WTC11 (cell line): ENCODE measurements at regions of chr5 and their contacts with region 1.

Region 1: DNA sequence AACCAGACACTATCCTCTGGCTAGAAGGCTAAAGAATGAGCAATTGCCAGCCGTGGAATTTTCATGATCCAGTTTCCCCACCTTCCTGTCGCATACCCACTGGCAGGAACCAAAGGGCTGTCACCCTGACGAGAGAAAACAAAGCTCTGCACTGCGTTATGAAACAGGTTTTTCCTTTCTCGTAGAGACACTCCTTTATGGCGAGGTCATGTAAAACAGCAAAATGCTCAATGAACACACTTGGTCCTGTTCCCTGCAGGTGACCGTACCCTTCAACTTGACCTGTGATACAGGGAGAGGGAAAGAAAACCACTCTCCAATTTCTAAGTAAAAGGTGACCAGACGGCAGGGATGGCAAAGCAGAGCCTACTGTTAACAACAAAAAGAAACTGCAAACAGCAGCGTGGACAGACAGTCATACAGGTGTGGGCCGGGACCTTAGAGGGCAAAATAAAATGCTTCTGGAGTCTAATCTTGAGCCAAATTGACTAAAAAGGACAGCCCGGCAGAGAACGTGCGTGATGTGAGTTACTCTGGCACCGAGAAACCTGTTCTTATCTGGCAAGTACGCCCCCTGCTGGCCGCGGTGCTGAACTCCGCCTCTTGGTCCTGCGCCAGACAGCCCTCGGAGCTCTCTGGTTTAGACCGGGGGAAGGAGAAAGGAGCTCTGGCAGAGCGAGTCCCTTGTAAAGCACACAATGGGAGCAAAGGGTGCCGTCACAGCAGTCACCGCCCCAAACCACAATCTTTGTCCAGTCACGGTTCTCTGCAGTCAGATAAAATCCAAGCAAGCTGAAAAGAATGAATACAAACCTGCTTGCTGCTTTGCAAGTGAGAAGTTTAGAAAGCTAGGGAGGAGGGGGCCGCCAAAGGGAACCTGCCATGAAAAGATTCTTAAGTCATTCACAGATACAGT is 98.9 kb downstream of the EFNA5 start:
- DNase-seq: peak; percentile 96
- ATAC-seq: peak; percentile 94
- H3K4me3 Mint-ChIP-seq: peak overlapping the region; percentile 55
- H3K27ac Mint-ChIP-seq: peak overlapping the region; percentile 70; the same call in 1 of the 2 replicates
- H3K4me1 Mint-ChIP-seq: peaks cover 88% of the 10 kb centered on the region
- H3K27me3 Mint-ChIP-seq: no peaks in the 10 kb centered on the region; the same call in 1 of the 2 replicates
- CTCF ChIP-seq: peak; percentile 94

Region 2: GRCh38 chr5:107284822-107285525 is 286.9 kb before region 1 on chr5:
- CTCF ChIA-PET with region 1: no interaction called
- POLR2A ChIA-PET with region 1: no interaction called
- DNase-seq: no peak
- ATAC-seq: no peak
- H3K4me3 Mint-ChIP-seq: no peak overlapping the region
- H3K27ac Mint-ChIP-seq: no peak overlapping the region
- H3K4me1 Mint-ChIP-seq: 0 out of 2 replicates have a peak, but pooled peaks cover 7% of the 10 kb centered on the region
- H3K27me3 Mint-ChIP-seq: no peaks in the 10 kb centered on the region; the same call in 1 of the 2 replicates
- CTCF ChIP-seq: no peak

Region 3: DNA sequence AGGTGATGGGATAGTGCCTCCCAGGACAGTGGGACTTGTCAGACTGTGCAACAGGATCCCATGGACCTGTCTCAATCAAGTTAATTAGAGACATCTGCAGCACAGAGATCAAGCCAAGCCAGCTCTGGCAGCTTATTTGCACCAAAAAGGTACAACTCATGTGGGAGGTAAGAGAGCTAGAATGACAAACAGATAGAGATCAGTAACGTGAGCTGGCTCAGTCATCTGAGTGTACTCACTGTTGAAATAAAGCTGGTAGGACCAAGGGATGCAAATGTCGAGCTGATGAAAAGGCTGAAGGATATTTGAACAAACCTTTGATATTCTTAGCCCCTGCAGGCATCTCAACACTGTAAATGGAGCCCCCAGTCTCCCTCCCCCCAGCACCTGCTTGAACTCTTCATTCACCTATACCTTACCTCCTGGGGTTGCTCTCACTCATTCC is 99.2 kb before region 1 on chr5:
- CTCF ChIA-PET with region 1: interaction called, 11 read pairs
- POLR2A ChIA-PET with region 1: no interaction called
- DNase-seq: peak; percentile 48
- ATAC-seq: peak; percentile 92
- H3K4me3 Mint-ChIP-seq: peak overlapping the region; percentile 2
- H3K27ac Mint-ChIP-seq: peak overlapping the region; percentile 88
- H3K4me1 Mint-ChIP-seq: peaks cover 91% of the 10 kb centered on the region
- H3K27me3 Mint-ChIP-seq: no peaks in the 10 kb centered on the region; the same call in 1 of the 2 replicates
- CTCF ChIP-seq: no peak

Region 4: GRCh38 chr5:107513337-107514085 is 58.4 kb before region 1 on chr5:
- CTCF ChIA-PET with region 1: interaction called, 14 read pairs
- POLR2A ChIA-PET with region 1: interaction called, 4 read pairs
- DNase-seq: no peak
- ATAC-seq: no peak
- H3K4me3 Mint-ChIP-seq: no peak overlapping the region
- H3K27ac Mint-ChIP-seq: no peak overlapping the region
- H3K4me1 Mint-ChIP-seq: peaks cover 66% of the 10 kb centered on the region
- H3K27me3 Mint-ChIP-seq: no peaks in the 10 kb centered on the region
- CTCF ChIP-seq: no peak

Region 5: DNA sequence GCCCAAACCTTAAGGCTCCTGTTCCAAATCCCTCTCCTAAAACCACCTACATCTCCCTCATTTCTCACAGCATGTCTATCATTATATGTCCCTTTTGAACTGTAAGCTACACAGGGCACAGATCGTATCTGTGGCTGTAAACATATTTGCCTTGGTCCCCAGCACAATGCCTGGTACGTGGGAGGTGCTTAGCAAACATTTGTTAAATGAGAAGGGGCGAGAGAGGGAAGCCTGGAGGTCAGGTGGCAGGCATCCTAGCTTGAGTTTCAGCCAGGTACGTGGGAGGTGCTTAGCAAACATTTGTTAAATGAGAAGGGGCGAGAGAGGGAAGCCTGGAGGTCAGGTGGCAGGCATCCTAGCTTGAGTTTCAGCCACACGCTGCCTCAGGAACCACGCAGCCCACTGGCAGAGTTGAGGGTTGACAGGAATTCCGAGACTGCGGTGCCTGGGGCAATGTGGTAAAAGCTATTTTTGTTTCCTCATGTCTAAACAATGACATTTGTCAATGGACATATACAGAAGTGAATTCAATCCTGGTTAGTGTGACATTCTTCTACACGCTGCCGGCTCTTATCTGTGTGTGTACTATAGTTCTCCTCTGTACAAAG is 14.7 kb before region 1 on chr5:
- CTCF ChIA-PET with region 1: interaction called, 40 read pairs
- POLR2A ChIA-PET with region 1: no interaction called
- DNase-seq: peak; percentile 58
- ATAC-seq: peak; percentile 71
- H3K4me3 Mint-ChIP-seq: no peak overlapping the region
- H3K27ac Mint-ChIP-seq: no peak overlapping the region; the same call in 1 of the 2 replicates
- H3K4me1 Mint-ChIP-seq: peaks cover 58% of the 10 kb centered on the region
- H3K27me3 Mint-ChIP-seq: no peaks in the 10 kb centered on the region
- CTCF ChIP-seq: no peak

Region 6: DNA sequence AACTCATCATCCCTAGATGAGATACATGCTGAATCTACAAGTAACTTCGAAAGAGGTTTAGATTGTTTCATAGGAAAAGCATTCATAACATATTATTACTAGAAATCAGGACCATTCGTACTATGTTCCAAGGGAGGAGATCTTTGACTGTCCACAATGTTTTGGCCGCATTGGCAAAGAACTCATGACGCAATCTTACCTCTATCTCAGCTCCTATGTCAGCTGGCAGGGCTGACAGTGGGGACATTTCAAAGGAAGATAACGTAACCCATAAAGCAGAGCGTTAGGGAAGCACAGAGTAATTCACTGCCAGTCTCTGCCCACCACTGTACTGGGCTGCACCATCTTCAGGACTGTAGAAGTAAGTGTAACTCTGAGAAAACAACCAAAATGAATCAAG is 29.2 kb after region 1 on chr5:
- CTCF ChIA-PET with region 1: interaction called, 32 read pairs
- POLR2A ChIA-PET with region 1: no interaction called
- DNase-seq: no peak
- ATAC-seq: no peak
- H3K4me3 Mint-ChIP-seq: no peak overlapping the region
- H3K27ac Mint-ChIP-seq: no peak overlapping the region
- H3K4me1 Mint-ChIP-seq: peaks cover 28% of the 10 kb centered on the region
- H3K27me3 Mint-ChIP-seq: no peaks in the 10 kb centered on the region
- CTCF ChIP-seq: no peak

Region 7: GRCh38 chr5:107655836-107656235 is 84.0 kb after region 1 on chr5:
- CTCF ChIA-PET with region 1: interaction called, 10 read pairs
- POLR2A ChIA-PET with region 1: no interaction called
- DNase-seq: no peak
- ATAC-seq: no peak
- H3K4me3 Mint-ChIP-seq: no peak overlapping the region
- H3K27ac Mint-ChIP-seq: peak overlapping the region; percentile 67; the same call in 1 of the 2 replicates
- H3K4me1 Mint-ChIP-seq: peaks cover 52% of the 10 kb centered on the region
- H3K27me3 Mint-ChIP-seq: peaks cover 15% of the 10 kb centered on the region
- CTCF ChIP-seq: no peak